Aorta (tissue), 5 donors: ENCODE measurements at regions of chr6 and their contacts with region 1.

Region 1: DNA sequence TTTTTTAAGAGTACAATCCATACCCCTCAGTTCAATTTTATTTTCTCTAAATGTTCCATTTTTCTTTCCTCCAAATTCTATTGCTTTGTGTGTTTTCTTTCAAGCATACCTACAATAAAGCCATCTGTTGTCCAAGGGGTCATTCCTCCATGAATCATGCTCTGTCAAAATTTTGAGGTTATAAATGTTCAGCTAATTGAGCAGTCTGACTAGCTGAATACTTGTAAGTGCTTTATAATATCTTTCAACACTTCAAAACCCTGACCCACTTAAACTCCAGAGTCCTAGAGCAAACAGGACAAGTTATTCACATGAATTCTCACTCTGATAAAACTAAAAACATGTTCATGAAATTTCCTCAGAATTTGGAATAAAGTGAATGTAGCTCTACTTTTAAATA is 33.4 kb upstream of the EYA4 start:
- DNase-seq: no peak
- ATAC-seq: no peak
- H3K4me3 ChIP-seq: no peak overlapping the region
- H3K27ac ChIP-seq: no peak overlapping the region
- H3K4me1 ChIP-seq: no peaks in the 10 kb centered on the region
- H3K27me3 ChIP-seq: no peaks in the 10 kb centered on the region

Region 2: GRCh38 chr6:133236932-133237331 is 29.2 kb after region 1 on chr6:
- intact Hi-C with region 1: loop called in 1 of 2 experiments (anchors 2 kb)
- DNase-seq: no peak
- ATAC-seq: no peak
- H3K4me3 ChIP-seq: no peak overlapping the region
- H3K27ac ChIP-seq: no peak overlapping the region
- H3K4me1 ChIP-seq: no peaks in the 10 kb centered on the region
- H3K27me3 ChIP-seq: no peaks in the 10 kb centered on the region